Body of pancreas (tissue), 4 donors: ENCODE measurements at regions of chr3 and their contacts with region 1.

Region 1: GRCh38 chr3:150348500-150348899 is 59.6 kb upstream of the TSC22D2 start:
- DNase-seq: peak in 1 of 4 donors; percentile 41
- ATAC-seq: no peak
- H3K4me3 ChIP-seq: no peak overlapping the region
- H3K27ac ChIP-seq: no peak overlapping the region
- H3K4me1 ChIP-seq: no peaks in the 10 kb centered on the region
- H3K27me3 ChIP-seq: no peaks in the 10 kb centered on the region
- CTCF ChIP-seq: no peak
- POLR2A ChIP-seq: no peak

Region 2: GRCh38 chr3:150079029-150079739 is 269.3 kb before region 1 on chr3:
- intact Hi-C with region 1: no loop called
- DNase-seq: peak in 3 of 4 donors; percentile 39 to 67 (median 50)
- ATAC-seq: peak; percentile 62
- H3K4me3 ChIP-seq: no peak overlapping the region
- H3K27ac ChIP-seq: no peak overlapping the region
- H3K4me1 ChIP-seq: no peaks in the 10 kb centered on the region
- H3K27me3 ChIP-seq: no peaks in the 10 kb centered on the region
- CTCF ChIP-seq: no peak
- POLR2A ChIP-seq: peak in 1 of 3 donors; percentile 15

Region 3: GRCh38 chr3:152071924-152072323 is 1723.4 kb after region 1 on chr3:
- intact Hi-C with region 1: loop called (anchors 10 kb)
- DNase-seq: no peak
- ATAC-seq: no peak
- H3K4me3 ChIP-seq: no peak overlapping the region
- H3K27ac ChIP-seq: no peak overlapping the region
- H3K4me1 ChIP-seq: no peaks in the 10 kb centered on the region
- H3K27me3 ChIP-seq: no peaks in the 10 kb centered on the region
- CTCF ChIP-seq: peak in 6 of 7 experiments; percentile 9 to 51 (median 42)
- POLR2A ChIP-seq: no peak